ENCODE measurements at regions of chr19 and their contacts with region 1.

Region 1: DNA sequence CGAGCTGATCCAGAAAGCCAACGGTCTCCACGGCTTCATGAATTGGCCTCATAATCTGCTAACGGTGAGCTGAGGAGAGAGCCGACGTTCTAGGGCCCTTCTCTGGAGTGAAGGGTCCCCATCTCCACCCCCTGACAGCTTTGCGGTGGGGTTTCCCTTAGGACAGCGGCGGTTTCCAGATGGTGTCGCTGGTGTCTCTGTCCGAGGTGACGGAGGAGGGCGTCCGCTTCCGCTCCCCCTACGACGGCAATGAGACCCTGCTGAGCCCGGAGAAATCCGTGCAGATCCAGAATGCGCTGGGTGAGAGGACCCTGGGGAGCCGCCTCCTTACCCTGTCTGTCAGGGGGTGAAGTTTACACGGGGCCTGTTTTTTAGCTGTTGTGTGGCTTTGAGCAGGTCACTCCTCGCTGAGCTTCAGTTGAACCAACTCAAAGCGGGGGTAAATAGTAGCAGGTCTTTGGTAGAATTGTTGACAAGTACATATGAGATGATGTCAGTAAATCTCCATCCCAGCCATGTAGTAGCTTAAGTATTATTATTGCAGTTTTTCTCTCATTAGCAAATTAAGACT is 801 bp downstream of the QTRT1 start:
- DNase-seq: peak; percentile 48
- H3K4me3 Mint-ChIP-seq: peak overlapping the region; percentile 83
- H3K27ac Mint-ChIP-seq: peak overlapping the region; percentile 68
- H3K4me1 Mint-ChIP-seq: peaks cover 11% of the 10 kb centered on the region
- H3K27me3 Mint-ChIP-seq: peaks cover 6% of the 10 kb centered on the region

Region 2: DNA sequence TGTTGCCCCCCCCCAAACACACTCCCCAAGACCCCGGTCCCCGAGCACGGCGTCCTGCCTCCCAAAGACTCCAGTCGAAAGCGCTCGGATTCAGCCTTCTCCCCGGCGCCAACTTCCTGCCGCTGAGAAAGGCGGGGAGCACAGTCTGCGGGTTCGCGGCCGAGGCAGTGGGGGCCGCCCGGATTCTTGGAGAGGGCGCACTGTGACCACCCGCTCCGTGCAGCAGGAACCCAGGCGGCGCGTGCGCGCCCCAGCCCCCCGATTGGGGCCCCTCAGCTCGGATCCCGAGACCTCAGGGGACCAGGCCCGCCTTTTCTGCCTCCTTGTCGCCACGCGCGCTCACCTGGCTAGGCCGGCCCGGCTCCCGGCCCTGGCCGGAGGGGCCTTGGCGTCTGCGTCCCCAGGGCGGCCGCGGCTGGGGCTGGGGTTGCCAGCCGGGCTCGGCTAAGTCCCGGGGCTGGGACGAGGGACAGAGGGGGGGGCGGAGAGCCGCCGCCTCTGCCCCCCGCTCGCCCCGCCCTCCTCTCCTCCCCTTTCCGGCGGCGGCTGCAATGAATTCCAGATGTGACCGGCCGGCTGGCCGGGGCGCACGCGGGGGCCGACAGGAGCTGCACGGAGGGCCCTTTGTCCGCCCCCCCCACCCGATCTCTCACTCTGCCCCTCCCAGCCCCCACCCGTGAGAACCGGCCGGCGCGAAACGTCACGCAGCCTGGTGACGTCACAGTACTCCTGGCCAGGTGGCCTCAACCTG is 471.0 kb before region 1 on chr19 and contains the start of gene S1PR2:
- CTCF ChIA-PET with region 1: no interaction called
- intact Hi-C with region 1: no loop called
- DNase-seq: peak; percentile 66
- H3K4me3 Mint-ChIP-seq: peak within 1 kb of the TSS; percentile 84
- H3K27ac Mint-ChIP-seq: peak within 1 kb of the TSS; percentile 72
- H3K4me1 Mint-ChIP-seq: peaks cover 24% of the 10 kb centered on the region
- H3K27me3 Mint-ChIP-seq: no peaks in the 10 kb centered on the region
- total RNA-seq, gene S1PR2: 3.4 TPM

Region 3: DNA sequence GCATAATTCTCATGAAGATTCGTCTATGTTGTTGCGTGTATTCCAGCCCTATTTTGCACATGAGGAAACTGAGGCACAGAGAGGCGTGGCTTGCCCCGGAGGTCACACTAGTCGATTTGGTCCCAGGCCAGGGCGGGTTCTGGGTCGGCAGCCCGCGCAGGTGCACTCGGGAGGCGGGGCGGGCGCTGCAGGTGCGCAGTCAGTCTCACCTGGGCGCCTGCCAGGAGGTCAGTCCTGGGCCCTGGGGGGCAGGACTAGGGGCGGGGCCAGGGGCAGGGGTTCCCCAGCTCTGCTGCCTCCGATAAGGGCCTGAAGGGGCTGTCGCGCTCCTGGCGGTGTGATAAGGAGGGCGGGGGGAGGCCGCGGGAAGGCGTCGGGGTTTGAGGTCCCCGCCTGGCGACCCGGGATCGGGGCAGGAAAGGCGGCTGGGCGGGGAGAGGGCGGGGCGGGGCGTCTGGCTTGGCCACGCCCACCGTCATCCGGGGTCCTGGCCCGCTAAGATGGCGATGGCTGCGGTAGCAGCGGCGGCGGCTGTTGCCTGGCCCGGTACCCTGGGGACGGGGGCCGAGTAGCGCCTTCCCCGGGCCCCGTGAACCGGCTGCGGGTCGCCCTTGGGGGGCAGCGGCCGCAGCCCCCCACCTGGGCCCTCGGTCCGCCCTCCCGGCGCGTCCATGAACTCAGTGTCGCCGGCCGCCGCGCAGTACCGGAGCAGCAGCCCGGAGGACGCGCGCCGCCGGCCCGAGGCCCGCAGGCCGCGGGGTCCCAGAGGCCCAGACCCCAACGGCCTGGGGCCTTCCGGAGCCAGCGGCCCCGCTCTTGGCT is 158.4 kb before region 1 on chr19 and contains the start of gene ATG4D:
- CTCF ChIA-PET with region 1: interaction called, 5 read pairs
- intact Hi-C with region 1: loop called (anchors 1 kb)
- DNase-seq: peak; percentile 78
- H3K4me3 Mint-ChIP-seq: peak within 1 kb of the TSS; percentile 85
- H3K27ac Mint-ChIP-seq: peak within 1 kb of the TSS; percentile 84
- H3K4me1 Mint-ChIP-seq: peaks cover 16% of the 10 kb centered on the region
- H3K27me3 Mint-ChIP-seq: peaks cover 5% of the 10 kb centered on the region
- total RNA-seq, gene ATG4D: 21.6 to 22.5 TPM

Region 4: DNA sequence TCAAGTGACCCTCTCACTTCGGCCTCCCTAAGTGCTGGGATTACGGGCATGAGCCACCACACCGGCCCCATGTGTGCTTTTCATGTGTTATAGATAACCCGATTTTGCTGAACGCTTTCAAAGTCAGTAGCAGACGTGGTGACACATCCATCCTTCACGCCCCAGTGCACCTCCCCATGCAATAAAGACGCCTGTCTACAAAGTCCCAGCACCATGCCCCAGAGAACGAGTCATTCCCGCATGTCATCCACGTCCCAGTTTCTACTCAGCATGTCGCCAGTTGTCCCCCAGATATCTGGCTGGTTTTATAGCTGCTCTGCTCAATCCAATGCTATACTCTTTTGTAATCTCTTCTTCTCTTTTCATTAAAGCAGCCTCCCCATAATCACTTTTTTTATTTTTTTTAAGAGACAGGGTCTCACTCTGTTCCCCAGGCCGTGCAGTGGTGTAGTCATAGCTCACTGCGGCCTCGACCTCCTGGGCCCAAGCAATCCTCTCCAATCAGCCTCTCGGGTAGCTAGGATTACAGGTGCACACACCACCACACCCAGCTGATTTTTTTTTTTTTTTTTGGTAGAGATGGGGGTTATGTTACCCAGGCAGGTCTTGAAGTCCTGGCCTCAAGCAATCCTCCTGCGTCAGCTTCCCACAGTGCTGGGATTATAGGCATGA is 58.4 kb after region 1 on chr19:
- CTCF ChIA-PET with region 1: no interaction called
- intact Hi-C with region 1: no loop called
- DNase-seq: peak; percentile 65
- H3K4me3 Mint-ChIP-seq: peak overlapping the region; percentile 71
- H3K27ac Mint-ChIP-seq: peak overlapping the region; percentile 96
- H3K4me1 Mint-ChIP-seq: peaks cover 88% of the 10 kb centered on the region
- H3K27me3 Mint-ChIP-seq: no peaks in the 10 kb centered on the region

Region 5: DNA sequence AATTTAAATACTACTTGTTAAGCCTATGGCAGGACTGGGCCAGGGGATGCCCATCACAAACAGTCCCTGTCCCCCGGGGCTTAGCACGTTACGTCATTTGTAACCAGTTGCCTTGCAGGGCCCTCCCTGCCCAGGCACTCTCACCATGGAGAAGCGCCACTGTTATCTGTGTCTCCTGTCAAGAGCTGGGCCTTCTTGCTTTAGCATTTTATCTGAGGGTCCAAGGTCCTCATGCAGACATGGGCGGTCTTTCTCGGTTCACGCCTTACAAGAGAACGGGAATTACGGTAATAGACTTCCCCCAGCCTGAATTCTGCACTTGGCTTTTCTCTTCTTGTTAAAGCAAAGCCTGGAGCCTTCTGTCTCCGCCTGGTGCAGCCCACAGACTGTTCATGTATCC is 87.8 kb after region 1 on chr19:
- CTCF ChIA-PET with region 1: no interaction called
- intact Hi-C with region 1: no loop called
- DNase-seq: no peak
- H3K4me3 Mint-ChIP-seq: no peak overlapping the region
- H3K27ac Mint-ChIP-seq: no peak overlapping the region
- H3K4me1 Mint-ChIP-seq: no peaks in the 10 kb centered on the region
- H3K27me3 Mint-ChIP-seq: no peaks in the 10 kb centered on the region